IMR-90 (cell line): ENCODE measurements at regions of chr1 and their contacts with region 1.

Region 1: DNA sequence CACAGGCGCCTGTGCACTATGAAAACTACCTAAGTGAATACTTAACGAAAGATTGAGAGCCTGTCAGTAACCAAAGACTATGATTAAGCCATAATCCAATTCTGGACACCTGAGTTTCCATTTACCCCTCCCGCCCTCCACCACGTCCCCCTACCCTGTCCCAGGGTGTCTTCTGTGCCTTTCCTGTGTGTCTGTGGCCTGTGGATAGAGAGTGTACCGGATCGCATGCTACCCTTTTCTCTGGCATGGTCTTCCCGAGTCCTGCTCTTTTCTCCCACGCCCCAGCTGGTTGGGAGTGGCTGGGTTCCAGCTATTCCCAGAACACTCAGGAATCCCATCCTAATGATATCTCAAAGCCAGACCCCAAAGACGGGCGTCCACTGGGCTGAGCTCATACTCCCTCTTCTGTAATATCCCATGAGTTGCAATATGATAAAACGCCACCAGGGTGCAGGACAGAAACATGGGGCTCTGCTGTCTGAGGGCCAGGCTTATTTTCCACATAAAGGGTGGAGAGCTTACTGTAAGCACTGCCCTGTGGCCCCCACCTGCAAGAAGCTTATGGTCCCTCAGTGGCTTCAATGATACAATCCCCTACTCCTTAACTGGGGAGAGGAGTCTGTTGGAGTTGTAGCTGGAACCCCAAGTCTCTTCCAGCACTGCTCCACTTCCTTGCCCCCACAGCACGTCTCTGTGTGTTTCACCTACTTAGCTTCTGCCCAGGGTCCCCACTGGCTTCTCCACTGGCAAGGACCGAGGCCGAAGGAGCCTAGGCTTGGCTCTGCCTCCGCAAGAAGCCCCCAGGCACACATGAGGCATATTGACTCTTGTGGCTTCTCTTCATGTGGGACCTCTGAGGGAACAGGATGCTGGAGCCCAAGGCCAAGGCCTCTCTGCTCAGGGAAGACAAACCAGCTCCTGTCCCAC is 17.6 kb upstream of the ALX3 start:
- DNase-seq: peak; percentile 56
- ATAC-seq: peak; percentile 89
- H3K4me3 ChIP-seq: no peak overlapping the region
- H3K27ac ChIP-seq: no peak overlapping the region
- H3K4me1 ChIP-seq: no peaks in the 10 kb centered on the region; the same call in none of the 2 replicates
- H3K27me3 ChIP-seq: peaks cover 74% of the 10 kb centered on the region
- CTCF ChIP-seq: peak; percentile 70
- POLR2A ChIP-seq: no peak
- RAD21 ChIP-seq: peak; percentile 60

Region 2: DNA sequence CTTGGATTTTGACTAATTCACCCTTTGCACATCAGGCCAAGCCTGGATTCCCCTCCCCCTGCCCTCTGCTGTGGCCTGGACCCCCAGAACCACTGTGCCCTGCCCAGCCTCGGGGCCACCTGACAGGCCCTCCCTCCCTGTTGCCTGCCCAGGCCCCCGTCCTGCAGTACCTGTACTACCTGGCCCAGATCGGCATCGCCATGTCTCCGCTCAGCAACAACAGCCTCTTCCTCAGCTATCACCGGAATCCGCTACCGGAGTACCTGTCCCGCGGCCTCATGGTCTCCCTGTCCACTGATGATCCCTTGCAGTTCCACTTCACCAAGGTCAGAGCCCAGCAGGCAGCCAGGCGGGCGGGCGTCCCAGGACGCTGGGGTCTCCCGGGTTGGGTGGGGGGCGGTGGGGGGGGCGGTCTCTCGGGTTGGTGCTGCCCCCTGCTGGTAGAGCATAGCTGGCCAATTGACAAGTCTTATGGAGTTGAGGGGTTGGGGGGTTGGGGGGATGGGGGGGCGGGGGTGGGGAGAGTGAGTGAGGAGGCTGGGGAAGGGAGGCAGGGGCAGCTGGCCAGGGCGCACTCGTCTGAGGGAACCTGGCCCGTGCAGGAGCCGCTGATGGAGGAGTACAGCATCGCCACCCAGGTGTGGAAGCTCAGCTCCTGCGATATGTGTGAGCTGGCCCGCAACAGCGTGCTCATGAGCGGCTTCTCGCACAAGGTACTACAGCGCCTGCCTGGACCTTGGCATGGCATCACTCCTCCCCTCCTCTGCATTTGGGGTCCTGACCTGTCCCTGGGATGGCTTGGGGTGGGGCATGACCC is 457.8 kb before region 1 on chr1:
- CTCF ChIA-PET with region 1: no interaction called
- POLR2A ChIA-PET with region 1: no interaction called
- dilution Hi-C with region 1: no loop called
- in situ Hi-C with region 1: no loop called
- intact Hi-C with region 1: no loop called
- DNase-seq: no peak
- ATAC-seq: no peak
- H3K4me3 ChIP-seq: no peak overlapping the region
- H3K27ac ChIP-seq: no peak overlapping the region
- H3K4me1 ChIP-seq: peaks cover 1% of the 10 kb centered on the region; the same call in 1 of the 2 replicates
- H3K27me3 ChIP-seq: no peaks in the 10 kb centered on the region
- CTCF ChIP-seq: no peak
- POLR2A ChIP-seq: no peak
- RAD21 ChIP-seq: 0 out of 2 replicates have a peak, but pooled peaks have one; percentile 23

Region 3: DNA sequence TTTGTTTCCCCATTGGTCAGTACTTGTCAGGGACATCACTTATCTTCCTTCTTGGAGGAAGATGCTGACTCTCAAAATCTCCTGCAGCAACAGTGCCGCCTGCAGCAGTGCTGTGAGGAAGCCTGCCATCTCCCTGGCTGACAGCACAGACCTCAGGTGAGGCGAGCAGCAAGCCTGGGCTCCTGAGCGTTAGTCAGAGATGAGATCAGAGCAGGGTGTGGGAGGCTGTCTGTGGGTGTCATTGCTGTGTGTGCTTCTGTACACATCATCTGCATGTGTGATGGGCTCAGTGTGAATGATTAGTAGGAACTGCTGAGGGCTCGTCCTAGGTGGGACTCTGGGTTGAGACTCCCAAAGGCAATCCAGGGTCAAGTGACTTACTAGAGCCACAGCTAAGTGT is 47.5 kb before region 1 on chr1:
- CTCF ChIA-PET with region 1: no interaction called
- POLR2A ChIA-PET with region 1: no interaction called
- dilution Hi-C with region 1: no loop called
- in situ Hi-C with region 1: no loop called
- intact Hi-C with region 1: loop called (anchors 1 kb)
- DNase-seq: no peak
- ATAC-seq: no peak
- H3K4me3 ChIP-seq: no peak overlapping the region
- H3K27ac ChIP-seq: no peak overlapping the region
- H3K4me1 ChIP-seq: no peaks in the 10 kb centered on the region
- H3K27me3 ChIP-seq: no peaks in the 10 kb centered on the region
- CTCF ChIP-seq: no peak
- POLR2A ChIP-seq: no peak
- RAD21 ChIP-seq: no peak

Region 4: GRCh38 chr1:110106013-110106941 is 18.2 kb after region 1 on chr1:
- CTCF ChIA-PET with region 1: interaction called, 22 read pairs
- POLR2A ChIA-PET with region 1: no interaction called
- dilution Hi-C with region 1: no loop called
- in situ Hi-C with region 1: no loop called
- intact Hi-C with region 1: loop called (anchors 2 kb)
- DNase-seq: peak; percentile 69
- ATAC-seq: peak; percentile 98
- H3K4me3 ChIP-seq: no peak overlapping the region
- H3K27ac ChIP-seq: no peak overlapping the region
- H3K4me1 ChIP-seq: no peaks in the 10 kb centered on the region; the same call in 1 of the 2 replicates
- H3K27me3 ChIP-seq: peaks cover 46% of the 10 kb centered on the region
- CTCF ChIP-seq: peak; percentile 94
- POLR2A ChIP-seq: no peak
- RAD21 ChIP-seq: peak; percentile 92

Region 5: DNA sequence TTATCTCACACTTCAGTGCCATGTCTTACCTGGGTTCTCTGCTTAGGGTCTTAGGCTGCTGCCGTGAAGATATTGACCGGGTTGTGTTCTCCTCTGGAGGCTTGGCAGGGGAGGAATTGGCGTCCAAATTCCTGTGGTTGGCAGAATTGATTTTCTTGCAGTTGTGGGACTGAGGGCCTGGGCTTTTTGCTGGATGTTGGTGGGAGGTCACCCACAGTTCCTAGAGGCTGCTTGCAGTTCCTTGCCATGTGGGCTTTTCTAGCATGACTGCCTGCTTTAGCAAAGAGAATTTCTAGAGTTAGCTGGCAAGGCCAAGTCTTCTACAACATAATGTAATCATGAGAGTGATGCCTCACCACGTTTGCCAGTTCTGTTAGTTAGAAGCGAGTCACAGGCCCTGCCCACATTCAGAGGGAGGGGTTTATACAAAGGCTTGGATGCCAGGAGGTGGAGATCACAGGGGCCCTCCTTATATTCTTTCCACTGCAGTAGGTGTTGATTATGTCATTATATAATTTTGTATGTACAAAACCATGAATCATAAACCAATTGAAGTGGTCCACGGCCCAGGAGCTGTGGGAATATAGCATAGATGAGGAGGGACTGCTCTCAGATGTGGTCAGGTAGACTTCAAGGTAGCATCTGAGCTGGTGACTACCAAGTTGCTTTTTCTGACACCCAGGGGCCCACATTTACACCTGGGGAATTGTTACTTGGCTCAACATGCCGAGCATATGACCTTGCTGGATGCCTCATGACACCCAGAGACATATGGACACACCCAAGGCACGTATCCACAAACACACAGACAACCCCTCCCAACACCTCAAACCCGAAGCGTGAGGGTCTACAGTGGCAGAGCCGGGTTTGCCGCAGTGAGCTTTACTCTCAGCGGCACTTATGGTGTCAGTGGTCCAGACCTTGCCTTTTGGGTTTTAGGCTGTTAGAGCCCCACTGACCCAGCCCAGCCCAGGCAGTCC is 30.9 kb after region 1 on chr1:
- CTCF ChIA-PET with region 1: no interaction called
- POLR2A ChIA-PET with region 1: no interaction called
- dilution Hi-C with region 1: no loop called
- in situ Hi-C with region 1: no loop called
- intact Hi-C with region 1: loop called (anchors 2 kb)
- DNase-seq: peak; percentile 52
- ATAC-seq: peak; percentile 40; the same call in 1 of the 2 replicates
- H3K4me3 ChIP-seq: no peak overlapping the region
- H3K27ac ChIP-seq: no peak overlapping the region
- H3K4me1 ChIP-seq: no peaks in the 10 kb centered on the region
- H3K27me3 ChIP-seq: peaks cover 29% of the 10 kb centered on the region
- CTCF ChIP-seq: no peak
- POLR2A ChIP-seq: no peak
- RAD21 ChIP-seq: no peak